Breast epithelium (tissue), 4 donors: ENCODE measurements at regions of chr14 and their contacts with region 1.

Region 1: DNA sequence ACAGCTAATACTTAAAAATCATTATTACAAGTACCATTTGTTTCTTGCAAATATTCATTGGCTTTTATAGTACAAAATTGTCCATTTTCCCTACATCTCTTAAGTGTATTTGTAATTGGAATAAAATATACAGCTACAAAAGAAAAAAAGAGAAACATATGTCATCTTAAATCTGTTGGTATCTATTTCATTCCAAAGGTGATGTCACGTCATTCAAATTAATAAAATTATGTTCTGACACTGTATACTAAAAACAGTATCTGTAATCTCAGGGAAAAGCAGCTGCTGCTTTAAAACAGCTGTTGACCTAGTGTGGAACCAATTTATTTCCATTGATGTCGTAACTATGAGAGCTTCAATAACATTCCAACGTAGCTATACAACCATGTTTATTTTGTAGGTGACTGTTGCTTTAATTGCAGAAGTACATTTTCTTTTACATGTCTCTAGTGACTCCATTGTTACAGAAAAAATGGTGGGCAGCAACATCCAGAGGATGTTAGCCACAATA is 571.8 kb downstream of the RPS29 start:
- DNase-seq: no peak
- H3K4me3 ChIP-seq: no peak overlapping the region
- H3K27ac ChIP-seq: no peak overlapping the region
- H3K4me1 ChIP-seq: no peaks in the 10 kb centered on the region
- H3K27me3 ChIP-seq: no peaks in the 10 kb centered on the region
- CTCF ChIP-seq: no peak
- POLR2A ChIP-seq: no peak

Region 2: GRCh38 chr14:48075487-48075886 is 938.9 kb before region 1 on chr14:
- intact Hi-C with region 1: no loop called
- DNase-seq: no peak
- H3K4me3 ChIP-seq: no peak overlapping the region
- H3K27ac ChIP-seq: no peak overlapping the region
- H3K4me1 ChIP-seq: no peaks in the 10 kb centered on the region
- H3K27me3 ChIP-seq: no peaks in the 10 kb centered on the region
- CTCF ChIP-seq: no peak
- POLR2A ChIP-seq: no peak

Region 3: GRCh38 chr14:48490756-48491155 is 523.7 kb before region 1 on chr14:
- intact Hi-C with region 1: loop called (anchors 5 kb)
- DNase-seq: no peak
- H3K4me3 ChIP-seq: no peak overlapping the region
- H3K27ac ChIP-seq: no peak overlapping the region
- H3K4me1 ChIP-seq: no peaks in the 10 kb centered on the region
- H3K27me3 ChIP-seq: no peaks in the 10 kb centered on the region
- CTCF ChIP-seq: no peak
- POLR2A ChIP-seq: no peak